ENCODE measurements at regions of chr10 and their contacts with region 1.

Region 1: DNA sequence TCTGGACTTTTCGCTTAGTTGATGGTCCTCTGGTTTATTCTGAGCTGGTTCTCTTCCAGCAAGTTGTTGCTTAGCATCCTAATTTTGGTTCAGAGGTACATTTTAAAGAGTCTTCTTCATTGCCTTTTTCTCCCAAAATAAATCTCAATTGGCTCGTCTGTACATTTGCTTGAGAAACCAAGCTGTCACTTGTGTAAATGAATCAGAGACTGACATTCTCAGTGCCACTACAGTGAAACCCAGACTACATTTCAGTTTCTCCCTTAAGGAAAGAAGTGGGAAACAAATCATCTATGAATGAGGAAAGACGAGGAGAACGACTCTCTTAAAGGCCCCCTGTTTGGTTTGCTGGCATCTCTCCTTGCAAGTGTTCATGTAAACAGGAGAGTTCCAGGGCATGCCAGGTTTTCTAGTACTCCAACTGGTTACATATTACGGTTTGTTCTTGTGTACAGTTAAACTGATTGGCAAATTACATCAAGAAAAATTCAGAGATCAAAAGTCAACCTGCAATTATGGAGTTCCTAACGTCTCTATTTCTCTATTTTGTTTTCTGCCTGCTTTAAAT is 654.6 kb downstream of the SH2D4B start:
- DNase-seq: no peak
- ATAC-seq: no peak
- H3K4me3 ChIP-seq: no peak overlapping the region
- H3K27ac ChIP-seq: no peak overlapping the region
- H3K4me1 ChIP-seq: no peaks in the 10 kb centered on the region
- H3K27me3 ChIP-seq: no peaks in the 10 kb centered on the region
- CTCF ChIP-seq: no peak
- POLR2A ChIP-seq: no peak
- RAD21 ChIP-seq: no peak

Region 2: DNA sequence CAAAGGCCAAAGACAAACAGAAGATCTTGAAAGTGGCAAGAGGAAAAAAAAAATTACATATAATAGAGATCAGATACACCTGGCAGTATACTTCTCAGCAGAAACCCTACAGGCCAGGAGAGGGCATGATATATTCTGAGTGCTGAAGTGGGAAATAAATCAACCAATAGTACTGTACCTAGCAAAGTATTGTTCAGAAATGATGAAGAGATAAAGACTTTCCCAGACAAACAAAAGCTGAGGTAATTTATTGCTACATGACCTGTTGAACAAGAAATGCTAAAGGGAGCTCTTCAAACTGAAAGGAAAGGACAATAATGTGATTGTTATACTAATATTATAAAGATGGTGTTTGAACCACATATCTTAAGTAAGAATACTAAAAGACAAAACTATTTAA is 362.7 kb before region 1 on chr10:
- CTCF ChIA-PET with region 1: no interaction called
- POLR2A ChIA-PET with region 1: interaction called, 21 read pairs
- dilution Hi-C with region 1: no loop called
- in situ Hi-C with region 1: no loop called
- intact Hi-C with region 1: no loop called
- DNase-seq: no peak
- ATAC-seq: no peak
- H3K4me3 ChIP-seq: no peak overlapping the region
- H3K27ac ChIP-seq: no peak overlapping the region
- H3K4me1 ChIP-seq: no peaks in the 10 kb centered on the region
- H3K27me3 ChIP-seq: no peaks in the 10 kb centered on the region
- CTCF ChIP-seq: no peak
- POLR2A ChIP-seq: no peak
- RAD21 ChIP-seq: no peak

Region 3: GRCh38 chr10:81534991-81535390 is 342.7 kb after region 1 on chr10:
- CTCF ChIA-PET with region 1: no interaction called
- POLR2A ChIA-PET with region 1: no interaction called
- dilution Hi-C with region 1: no loop called
- in situ Hi-C with region 1: no loop called
- intact Hi-C with region 1: no loop called
- DNase-seq: no peak
- ATAC-seq: no peak
- H3K4me3 ChIP-seq: no peak overlapping the region
- H3K27ac ChIP-seq: no peak overlapping the region
- H3K4me1 ChIP-seq: no peaks in the 10 kb centered on the region
- H3K27me3 ChIP-seq: no peaks in the 10 kb centered on the region
- CTCF ChIP-seq: no peak
- POLR2A ChIP-seq: no peak
- RAD21 ChIP-seq: no peak